ENCODE measurements at regions of chr6 and their contacts with region 1.

Region 1: DNA sequence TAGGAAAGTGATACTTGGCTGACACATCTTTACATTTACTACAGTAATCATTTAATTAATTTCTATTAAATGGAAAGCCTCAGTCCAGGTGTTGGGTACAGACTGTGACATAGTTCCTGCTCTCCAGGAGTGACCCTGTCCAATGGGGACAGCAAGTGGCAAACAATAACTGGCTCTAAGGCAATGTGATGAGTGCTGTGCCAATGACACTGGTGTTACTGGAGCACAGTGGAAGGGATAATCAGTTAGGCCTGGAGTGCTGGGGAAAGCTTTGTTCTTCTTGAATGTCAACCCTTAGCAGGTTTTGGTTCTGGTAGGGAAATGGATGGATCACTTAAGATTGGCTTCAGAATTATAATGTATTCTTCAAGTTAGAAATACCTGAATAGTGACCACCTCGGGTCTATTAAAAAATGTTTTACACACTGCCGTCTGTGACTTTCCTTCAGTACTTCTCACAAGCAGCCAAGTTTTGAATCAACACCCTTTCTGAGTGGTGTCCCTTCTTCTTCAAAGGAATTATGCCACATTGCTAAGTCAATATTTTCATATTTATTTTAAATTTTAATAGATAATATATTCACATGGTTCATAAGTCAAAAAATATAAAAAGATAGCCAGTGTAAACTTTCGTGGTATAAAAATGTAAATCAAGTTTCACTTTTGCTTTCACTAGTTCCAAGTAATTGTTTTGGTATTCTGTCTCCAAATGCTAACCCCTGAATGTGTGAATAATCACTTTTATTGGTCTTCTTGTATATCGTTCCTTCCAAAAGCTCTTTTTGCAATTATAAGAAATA is 9.6 kb downstream of the CMTR1 start:
- DNase-seq: no peak
- H3K4me3 Mint-ChIP-seq: no peak overlapping the region
- H3K27ac Mint-ChIP-seq: no peak overlapping the region
- H3K4me1 Mint-ChIP-seq: no peaks in the 10 kb centered on the region
- H3K27me3 Mint-ChIP-seq: no peaks in the 10 kb centered on the region
- CTCF ChIP-seq: no peak

Region 2: GRCh38 chr6:37365762-37366161 is 76.9 kb before region 1 on chr6:
- CTCF ChIA-PET with region 1: interaction called, 11 read pairs
- POLR2A ChIA-PET with region 1: no interaction called
- intact Hi-C with region 1: no loop called
- DNase-seq: peak; percentile 11
- H3K4me3 Mint-ChIP-seq: no peak overlapping the region
- H3K27ac Mint-ChIP-seq: no peak overlapping the region
- H3K4me1 Mint-ChIP-seq: peaks cover 10% of the 10 kb centered on the region
- H3K27me3 Mint-ChIP-seq: no peaks in the 10 kb centered on the region
- CTCF ChIP-seq: no peak